Esophagus muscularis mucosa (tissue), 4 donors: ENCODE measurements at regions of chr10 and their contacts with region 1.

Region 1: DNA sequence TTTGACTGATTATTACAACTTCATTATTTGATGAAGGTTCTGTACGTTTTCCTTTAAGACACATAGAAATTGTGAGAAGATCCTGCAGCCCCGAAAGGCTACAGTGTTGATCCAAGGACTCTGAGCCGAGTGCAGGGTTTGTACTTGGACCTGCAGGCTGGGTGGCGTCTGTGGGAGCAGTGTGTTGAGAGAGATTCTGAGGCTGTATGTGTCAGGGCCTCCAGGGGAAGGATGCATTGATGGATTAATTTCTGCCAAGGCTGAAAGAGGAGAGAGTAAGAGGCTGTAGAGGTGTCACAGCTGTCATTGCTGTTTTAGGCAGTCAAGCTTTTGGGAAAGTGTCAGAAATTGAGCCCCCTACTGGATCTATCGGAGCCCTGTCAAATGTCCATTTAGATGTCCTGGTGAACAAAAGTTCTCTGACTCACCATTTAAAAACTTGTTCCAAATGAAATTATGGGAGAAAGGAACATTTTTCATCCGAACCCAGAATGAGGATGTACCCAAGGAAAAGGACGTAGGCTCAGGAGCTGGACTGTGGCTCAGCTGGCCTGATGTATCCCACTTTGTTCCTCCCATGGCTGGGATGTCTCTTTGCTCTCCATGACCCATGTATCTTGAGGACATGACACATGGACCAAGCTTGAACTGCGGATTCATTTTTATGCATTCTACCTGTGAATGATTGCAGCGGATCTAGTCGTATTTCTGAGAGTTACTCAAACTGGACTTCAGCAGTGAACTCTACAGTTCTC is 102.2 kb downstream of the TCF7L2 start:
- DNase-seq: no peak
- H3K4me3 ChIP-seq: no peak overlapping the region
- H3K27ac ChIP-seq: peak overlapping the region in 2 of 4 donors; percentile 2 to 46
- H3K4me1 ChIP-seq: peaks cover 30 to 78% (median 59%) of the 10 kb centered on the region in 4 donors
- H3K27me3 ChIP-seq: no peaks in the 10 kb centered on the region
- CTCF ChIP-seq: peak in 1 of 3 experiments; percentile 18
- EP300 ChIP-seq: no peak
- POLR2A ChIP-seq: no peak

Region 2: GRCh38 chr10:112949875-112950507 is 102.3 kb before region 1 on chr10 and contains the start of gene TCF7L2:
- intact Hi-C with region 1: loop called (anchors 10 kb)
- DNase-seq: peak; percentile 99
- H3K4me3 ChIP-seq: peak within 1 kb of the TSS; percentile 68 to 91 (median 76)
- H3K27ac ChIP-seq: peak within 1 kb of the TSS; percentile 90 to 93 (median 92)
- H3K4me1 ChIP-seq: peaks cover 15 to 46% (median 43%) of the 10 kb centered on the region in 4 donors
- H3K27me3 ChIP-seq: no peaks in the 10 kb centered on the region
- CTCF ChIP-seq: no peak
- EP300 ChIP-seq: no peak
- POLR2A ChIP-seq: peak; percentile 23
- total RNA-seq, gene TCF7L2: 7.8 to 24.1 (median 19.2) TPM

Region 3: DNA sequence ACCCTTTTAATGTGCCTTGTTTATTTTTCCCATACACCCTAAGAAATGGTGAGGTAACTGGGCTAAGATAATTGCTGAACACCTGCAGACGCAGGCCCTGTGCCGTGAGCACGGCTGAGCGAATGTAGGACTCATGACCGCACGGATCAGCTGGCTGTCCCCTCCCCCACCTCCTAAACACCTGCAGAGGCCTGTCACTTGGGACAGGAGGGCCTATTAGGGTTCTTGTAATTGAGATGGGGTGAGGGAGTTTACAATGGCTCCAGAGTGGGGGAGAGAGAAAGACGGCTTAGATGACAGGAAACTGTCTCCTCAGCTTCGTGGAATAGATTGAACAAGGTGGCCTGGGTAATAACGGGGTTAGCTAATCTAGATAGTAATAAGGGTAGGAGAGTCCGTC is 208.9 kb after region 1 on chr10:
- intact Hi-C with region 1: no loop called
- DNase-seq: no peak
- H3K4me3 ChIP-seq: no peak overlapping the region
- H3K27ac ChIP-seq: no peak overlapping the region
- H3K4me1 ChIP-seq: no peaks in the 10 kb centered on the region
- H3K27me3 ChIP-seq: peaks cover 0 to 36% (median 2%) of the 10 kb centered on the region in 4 donors
- CTCF ChIP-seq: no peak
- EP300 ChIP-seq: no peak
- POLR2A ChIP-seq: no peak